ENCODE measurements at regions of chr4 and their contacts with region 1.

Region 1: GRCh38 chr4:129862461-129862860 is 766.5 kb downstream of the C4orf33 start:
- DNase-seq: no peak
- ATAC-seq: no peak

Region 2: GRCh38 chr4:129502493-129502892 is 360.0 kb before region 1 on chr4:
- intact Hi-C with region 1: loop called (anchors 5 kb)
- DNase-seq: no peak
- ATAC-seq: no peak

Measured in sciatic nerve (tissue), 2 donors.